Endothelial cell of umbilical vein (primary cell): ENCODE measurements at regions of chr17 and their contacts with region 1.

Region 1: GRCh38 chr17:27805520-27806146 is 5.3 kb upstream of the NOS2 start:
- DNase-seq: peak; percentile 86
- H3K4me3 ChIP-seq: peak overlapping the region in 1 of 3 experiments; percentile 10
- H3K27ac ChIP-seq: peak overlapping the region; percentile 19
- H3K4me1 ChIP-seq: peaks cover 4% of the 10 kb centered on the region
- H3K27me3 ChIP-seq: peaks cover 0 to 5% of the 10 kb centered on the region in 2 experiments
- CTCF ChIP-seq: peak; percentile 83 to 85
- POLR2A ChIP-seq: no peak

Region 2: DNA sequence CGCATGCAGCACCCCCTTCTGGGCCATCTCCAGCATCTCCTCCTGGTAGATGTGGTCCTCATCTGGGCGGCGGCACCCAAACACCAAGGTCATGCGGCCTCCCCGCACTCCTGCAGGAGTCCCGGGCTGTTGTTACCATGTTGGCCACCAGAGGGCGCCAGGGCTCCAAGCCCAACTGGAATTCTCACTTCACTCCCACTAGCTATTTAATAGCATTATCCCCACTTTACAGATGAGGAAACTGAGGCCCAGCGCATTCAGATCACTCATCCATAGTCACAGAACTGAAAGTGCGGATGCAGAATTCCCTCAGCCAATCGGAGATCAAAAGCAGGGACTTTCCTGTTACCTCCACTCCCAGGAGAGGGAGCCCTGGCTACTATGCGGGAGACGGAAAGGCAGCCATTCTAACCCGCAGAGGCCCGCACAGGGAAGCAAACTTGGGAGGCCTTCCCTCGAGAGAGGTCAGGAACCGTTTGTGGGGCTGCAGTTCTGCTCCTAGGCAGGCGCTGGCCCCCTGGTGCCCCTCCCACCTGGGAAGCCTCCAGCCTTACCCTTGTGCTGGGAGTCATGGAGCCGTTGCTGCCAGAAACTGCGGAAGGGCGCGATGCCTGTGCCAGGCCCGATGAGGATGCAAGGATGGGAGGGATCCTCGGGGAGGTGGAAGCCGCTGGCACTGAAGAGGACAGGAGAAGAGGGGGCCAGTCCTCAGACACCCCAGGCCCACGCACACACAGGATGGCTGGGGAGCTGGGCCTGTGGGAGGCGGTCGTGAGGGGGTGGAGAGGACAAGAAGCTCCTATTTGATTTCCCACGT is 45.4 kb before region 1 on chr17:
- CTCF ChIA-PET with region 1: interaction called, 30 read pairs
- POLR2A ChIA-PET with region 1: no interaction called
- dilution Hi-C with region 1: no loop called
- intact Hi-C with region 1: no loop called
- DNase-seq: peak; percentile 38
- H3K4me3 ChIP-seq: no peak overlapping the region
- H3K27ac ChIP-seq: no peak overlapping the region
- H3K4me1 ChIP-seq: no peaks in the 10 kb centered on the region
- H3K27me3 ChIP-seq: no peaks in the 10 kb centered on the region
- CTCF ChIP-seq: peak; percentile 75 to 84
- POLR2A ChIP-seq: no peak

Region 3: DNA sequence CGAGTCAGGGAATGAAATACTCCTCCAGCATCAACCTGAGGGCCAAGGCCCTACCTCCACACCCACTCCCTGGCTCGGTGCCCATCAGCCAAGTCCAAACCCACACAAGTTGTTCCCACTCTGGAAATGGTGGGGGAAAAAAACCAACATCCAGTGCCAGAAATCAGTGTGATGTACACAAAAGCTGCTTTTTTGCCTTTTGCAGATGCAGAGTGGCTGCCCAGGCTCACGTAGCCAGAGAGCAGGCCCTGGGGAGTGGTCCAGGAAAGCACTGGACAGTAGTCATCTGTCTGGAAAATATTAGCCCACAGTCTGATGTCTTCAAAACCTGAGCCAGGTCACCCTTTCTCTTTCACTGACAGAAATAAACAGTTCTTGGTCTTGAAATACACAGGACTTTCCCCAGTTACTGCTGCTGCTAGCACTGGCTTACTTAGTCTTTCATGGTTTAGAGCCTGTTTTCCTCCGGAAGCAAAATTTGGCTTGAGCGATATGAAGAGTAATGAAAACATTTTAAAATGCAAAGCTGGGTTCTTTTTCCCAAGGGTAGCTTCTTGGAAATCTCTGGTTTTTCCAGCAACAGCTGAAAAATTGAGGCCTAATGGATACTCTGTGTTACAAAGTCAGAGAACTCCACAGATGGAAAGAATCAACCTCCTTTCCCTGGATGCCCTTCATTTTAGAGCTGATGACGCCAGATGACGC is 12.9 kb after region 1 on chr17:
- CTCF ChIA-PET with region 1: interaction called, 45 read pairs
- POLR2A ChIA-PET with region 1: interaction called, 3 read pairs
- dilution Hi-C with region 1: no loop called
- intact Hi-C with region 1: no loop called
- DNase-seq: peak; percentile 40
- H3K4me3 ChIP-seq: no peak overlapping the region
- H3K27ac ChIP-seq: peak overlapping the region; percentile 49
- H3K4me1 ChIP-seq: peaks cover 19% of the 10 kb centered on the region
- H3K27me3 ChIP-seq: no peaks in the 10 kb centered on the region
- CTCF ChIP-seq: no peak
- POLR2A ChIP-seq: no peak

Region 4: DNA sequence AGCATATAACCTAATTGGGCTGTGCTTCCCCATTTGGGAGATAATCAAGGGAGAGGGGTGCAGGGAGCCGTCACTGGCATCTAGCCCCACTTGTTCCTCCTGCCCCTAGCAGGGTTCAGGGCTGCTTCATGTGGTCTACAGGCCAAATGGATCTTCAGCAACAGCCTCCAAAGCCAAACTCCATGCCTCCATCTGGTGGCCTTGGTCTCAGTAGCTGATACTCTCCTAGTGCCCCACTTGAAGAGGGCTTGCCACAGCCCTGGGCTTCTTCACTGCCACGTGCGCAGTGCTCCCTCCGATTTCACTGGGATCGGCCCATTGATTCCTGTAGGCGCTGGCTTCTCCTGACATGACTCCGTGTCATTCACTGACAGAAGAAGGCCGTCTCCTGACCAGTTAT is 62.9 kb after region 1 on chr17:
- CTCF ChIA-PET with region 1: interaction called, 14 read pairs
- POLR2A ChIA-PET with region 1: no interaction called
- dilution Hi-C with region 1: no loop called
- intact Hi-C with region 1: no loop called
- DNase-seq: no peak
- H3K4me3 ChIP-seq: no peak overlapping the region
- H3K27ac ChIP-seq: no peak overlapping the region
- H3K4me1 ChIP-seq: no peaks in the 10 kb centered on the region
- H3K27me3 ChIP-seq: peaks cover 2 to 5% of the 10 kb centered on the region in 2 experiments
- CTCF ChIP-seq: no peak
- POLR2A ChIP-seq: no peak

Region 5: GRCh38 chr17:28252436-28252835 is 446.8 kb after region 1 on chr17:
- CTCF ChIA-PET with region 1: interaction called, 76 read pairs
- POLR2A ChIA-PET with region 1: no interaction called
- dilution Hi-C with region 1: no loop called
- intact Hi-C with region 1: loop called (anchors 1 kb)
- DNase-seq: no peak
- H3K4me3 ChIP-seq: no peak overlapping the region
- H3K27ac ChIP-seq: no peak overlapping the region
- H3K4me1 ChIP-seq: peaks cover 3% of the 10 kb centered on the region
- H3K27me3 ChIP-seq: no peaks in the 10 kb centered on the region
- CTCF ChIP-seq: no peak
- POLR2A ChIP-seq: no peak

Region 6: GRCh38 chr17:28346746-28347246 is 541.2 kb after region 1 on chr17:
- CTCF ChIA-PET with region 1: interaction called, 9 read pairs
- POLR2A ChIA-PET with region 1: no interaction called
- dilution Hi-C with region 1: no loop called
- intact Hi-C with region 1: loop called (anchors 1 kb)
- DNase-seq: peak; percentile 90
- H3K4me3 ChIP-seq: no peak overlapping the region
- H3K27ac ChIP-seq: peak overlapping the region; percentile 88
- H3K4me1 ChIP-seq: peaks cover 32% of the 10 kb centered on the region
- H3K27me3 ChIP-seq: no peaks in the 10 kb centered on the region
- CTCF ChIP-seq: peak; percentile 59 to 61
- POLR2A ChIP-seq: no peak